Calu3 (cell line): ENCODE measurements at regions of chr11 and their contacts with region 1.

Region 1: GRCh38 chr11:22304337-22304961 is 33.7 kb upstream of the SLC17A6 start:
- DNase-seq: no peak
- H3K4me3 Mint-ChIP-seq: no peak overlapping the region
- H3K27ac Mint-ChIP-seq: no peak overlapping the region
- H3K4me1 Mint-ChIP-seq: peaks cover 8% of the 10 kb centered on the region
- H3K27me3 Mint-ChIP-seq: peaks cover 13% of the 10 kb centered on the region
- CTCF ChIP-seq: no peak

Region 2: GRCh38 chr11:20647976-20648565 is 1656.4 kb before region 1 on chr11:
- CTCF ChIA-PET with region 1: no interaction called
- intact Hi-C with region 1: loop called (anchors 1 kb)
- DNase-seq: peak; percentile 61
- H3K4me3 Mint-ChIP-seq: no peak overlapping the region
- H3K27ac Mint-ChIP-seq: no peak overlapping the region
- H3K4me1 Mint-ChIP-seq: no peaks in the 10 kb centered on the region
- H3K27me3 Mint-ChIP-seq: peaks cover 22% of the 10 kb centered on the region
- CTCF ChIP-seq: peak; percentile 87

Region 3: DNA sequence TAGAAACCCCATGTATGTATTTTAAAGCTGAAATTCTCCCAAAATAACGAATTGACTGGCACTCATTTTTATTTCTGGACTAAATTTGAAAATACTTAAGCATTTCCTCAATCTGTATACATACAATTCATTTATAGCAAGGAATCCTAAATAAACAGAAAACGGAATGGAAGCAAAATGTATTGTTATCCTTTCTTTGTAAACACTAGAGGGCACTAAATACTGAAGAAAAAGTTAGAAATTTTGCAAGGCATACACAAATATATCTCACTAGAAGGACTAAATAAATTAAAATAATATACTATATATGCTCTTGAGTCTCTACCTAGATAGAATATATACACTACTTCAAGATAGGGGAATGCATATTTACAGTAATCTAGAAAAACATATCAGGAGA is 134.6 kb before region 1 on chr11:
- CTCF ChIA-PET with region 1: interaction called, 7 read pairs
- intact Hi-C with region 1: loop called (anchors 1 kb)
- DNase-seq: no peak
- H3K4me3 Mint-ChIP-seq: no peak overlapping the region
- H3K27ac Mint-ChIP-seq: no peak overlapping the region
- H3K4me1 Mint-ChIP-seq: no peaks in the 10 kb centered on the region
- H3K27me3 Mint-ChIP-seq: no peaks in the 10 kb centered on the region
- CTCF ChIP-seq: no peak

Region 4: GRCh38 chr11:22244986-22245592 is 59.4 kb before region 1 on chr11:
- CTCF ChIA-PET with region 1: no interaction called
- intact Hi-C with region 1: loop called (anchors 1 kb)
- DNase-seq: peak; percentile 5
- H3K4me3 Mint-ChIP-seq: no peak overlapping the region
- H3K27ac Mint-ChIP-seq: no peak overlapping the region
- H3K4me1 Mint-ChIP-seq: no peaks in the 10 kb centered on the region
- H3K27me3 Mint-ChIP-seq: no peaks in the 10 kb centered on the region
- CTCF ChIP-seq: peak; percentile 33